WTC11 (cell line): ENCODE measurements at regions of chr4 and their contacts with region 1.

Region 1: DNA sequence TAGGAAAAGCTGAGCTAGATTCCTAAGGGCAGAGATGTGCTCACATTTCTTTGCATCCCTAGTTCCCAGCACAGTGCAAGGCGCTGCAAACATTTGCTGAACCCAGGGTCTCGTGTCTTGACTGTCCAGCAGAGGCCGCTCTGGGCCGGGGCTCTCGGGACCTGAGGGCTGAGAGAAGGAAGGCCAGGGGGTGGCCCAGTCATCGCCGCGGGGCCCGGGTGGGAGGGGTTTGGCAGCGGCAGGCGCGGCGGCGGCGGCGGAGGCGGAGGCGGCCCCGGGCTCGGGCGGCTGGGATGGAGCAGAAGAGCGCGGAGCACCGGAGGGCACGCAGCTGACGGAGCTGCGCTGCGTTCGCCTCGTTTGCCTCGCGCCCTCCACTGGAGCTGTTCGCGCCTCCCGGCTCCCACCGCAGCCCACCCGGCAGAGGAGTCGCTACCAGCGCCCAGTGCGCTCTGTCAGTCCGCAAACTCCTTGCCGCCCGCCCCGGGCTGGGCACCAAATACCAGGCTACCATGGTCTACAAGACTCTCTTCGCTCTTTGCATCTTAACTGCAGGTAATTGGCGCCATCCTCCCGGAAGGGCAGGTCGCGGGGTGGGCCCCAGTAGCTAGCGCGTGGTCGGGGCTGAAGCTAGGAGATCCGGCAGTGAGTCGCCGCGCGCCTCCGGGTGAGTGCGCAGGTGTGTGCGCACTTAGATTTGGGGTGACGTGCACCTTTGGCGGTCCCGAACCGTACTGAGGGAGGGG is at the start of gene PARM1:
- DNase-seq: peak; percentile 97
- ATAC-seq: peak; percentile 85
- H3K4me3 Mint-ChIP-seq: peak within 1 kb of the TSS; percentile 89
- H3K27ac Mint-ChIP-seq: no peak within 1 kb of the TSS
- H3K4me1 Mint-ChIP-seq: peaks cover 34% of the 10 kb centered on the region
- H3K27me3 Mint-ChIP-seq: peaks cover 43% of the 10 kb centered on the region
- CTCF ChIP-seq: peak; percentile 49; the same call in 1 of the 2 replicates
- total RNA-seq, gene PARM1: 3.5 to 6.3 TPM (median 4.1 TPM) in 3 replicates

Region 2: DNA sequence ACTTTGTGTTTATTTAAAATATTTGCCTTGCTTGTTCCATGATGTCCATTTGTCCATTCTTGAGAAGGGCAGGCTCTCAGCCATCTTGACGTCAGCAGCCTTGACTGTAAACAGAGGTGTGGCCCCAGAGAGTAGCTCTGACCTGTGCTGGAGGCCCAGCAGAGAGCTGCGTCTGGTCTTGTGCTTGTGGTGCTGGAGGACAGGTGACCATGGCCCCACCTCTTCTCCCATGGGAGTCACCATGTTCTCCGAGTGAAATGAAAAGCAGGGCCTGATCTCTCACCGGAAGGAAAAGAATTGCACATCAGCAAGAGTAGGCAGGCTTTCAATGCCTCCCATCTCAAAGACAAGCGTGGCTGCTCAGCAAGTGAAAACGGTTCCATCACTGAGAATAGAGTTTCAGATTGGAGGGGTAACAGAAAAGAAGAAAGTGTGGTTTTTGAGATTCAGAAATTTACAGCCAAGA is 11.4 kb after region 1 on chr4:
- CTCF ChIA-PET with region 1: interaction called, 18 read pairs
- POLR2A ChIA-PET with region 1: no interaction called
- DNase-seq: no peak
- ATAC-seq: no peak
- H3K4me3 Mint-ChIP-seq: no peak overlapping the region
- H3K27ac Mint-ChIP-seq: no peak overlapping the region
- H3K4me1 Mint-ChIP-seq: peaks cover 24% of the 10 kb centered on the region
- H3K27me3 Mint-ChIP-seq: no peaks in the 10 kb centered on the region; the same call in 1 of the 2 replicates
- CTCF ChIP-seq: no peak

Region 3: DNA sequence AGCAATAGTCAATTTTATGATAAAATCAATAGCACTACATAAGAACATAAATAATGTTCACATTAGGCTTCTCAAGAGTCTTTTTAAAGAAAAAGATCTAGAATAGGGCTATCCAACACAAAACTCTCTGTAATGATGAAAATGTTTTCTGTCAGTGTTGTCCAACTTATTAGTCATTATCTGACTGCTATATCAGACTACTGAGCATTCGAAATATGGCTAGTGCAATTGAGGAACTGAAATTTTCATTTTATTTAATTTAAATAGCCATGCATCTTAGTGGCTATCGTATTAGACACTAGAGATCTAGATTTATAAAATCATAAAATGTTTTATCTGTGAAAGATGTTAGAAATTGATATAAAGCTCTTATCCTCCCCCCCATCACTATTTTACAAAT is 25.9 kb after region 1 on chr4:
- CTCF ChIA-PET with region 1: no interaction called
- POLR2A ChIA-PET with region 1: no interaction called
- DNase-seq: no peak
- ATAC-seq: no peak
- H3K4me3 Mint-ChIP-seq: no peak overlapping the region
- H3K27ac Mint-ChIP-seq: no peak overlapping the region
- H3K4me1 Mint-ChIP-seq: peaks cover 13% of the 10 kb centered on the region
- H3K27me3 Mint-ChIP-seq: no peaks in the 10 kb centered on the region; the same call in 1 of the 2 replicates
- CTCF ChIP-seq: no peak

Region 4: GRCh38 chr4:75118739-75119138 is 185.8 kb after region 1 on chr4:
- CTCF ChIA-PET with region 1: interaction called, 12 read pairs
- POLR2A ChIA-PET with region 1: no interaction called
- DNase-seq: no peak
- ATAC-seq: no peak
- H3K4me3 Mint-ChIP-seq: no peak overlapping the region
- H3K27ac Mint-ChIP-seq: 0 out of 2 replicates have a peak overlapping the region, but pooled peaks have one; percentile 18
- H3K4me1 Mint-ChIP-seq: peaks cover 6% of the 10 kb centered on the region
- H3K27me3 Mint-ChIP-seq: no peaks in the 10 kb centered on the region; the same call in 1 of the 2 replicates
- CTCF ChIP-seq: no peak

Region 5: DNA sequence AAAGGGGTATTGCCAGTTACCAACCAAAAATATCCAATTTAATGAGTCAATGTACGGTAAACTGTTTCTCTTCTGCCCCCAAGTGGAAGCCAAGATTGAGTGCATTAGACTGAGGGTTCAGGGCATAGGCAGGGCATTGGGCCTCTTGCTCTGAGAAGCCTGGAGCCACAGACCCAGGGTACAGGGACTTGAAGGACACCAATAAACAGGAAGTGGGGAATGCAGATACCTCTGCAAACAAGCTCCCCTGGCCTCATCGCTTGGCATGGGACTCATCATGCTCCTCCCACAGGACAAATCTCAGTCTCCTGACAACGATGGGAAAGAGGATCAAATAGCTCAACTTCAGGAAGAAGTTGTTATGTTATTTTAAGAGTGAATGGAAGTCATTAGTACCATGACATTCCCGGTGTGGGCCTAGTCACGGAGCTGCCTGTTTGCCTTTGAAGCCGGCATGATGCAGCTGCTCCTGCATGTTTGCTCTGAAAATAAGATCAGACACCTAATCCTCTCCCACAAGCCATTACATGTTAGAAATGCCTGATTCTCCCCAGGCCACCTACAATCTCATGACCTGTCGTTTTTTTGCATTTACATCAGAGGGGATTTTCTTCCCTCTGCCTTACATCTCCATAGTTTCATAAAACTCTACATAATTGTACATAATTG is 357.1 kb after region 1 on chr4:
- CTCF ChIA-PET with region 1: interaction called, 12 read pairs
- POLR2A ChIA-PET with region 1: no interaction called
- DNase-seq: peak; percentile 53
- ATAC-seq: peak; percentile 100
- H3K4me3 Mint-ChIP-seq: no peak overlapping the region
- H3K27ac Mint-ChIP-seq: no peak overlapping the region
- H3K4me1 Mint-ChIP-seq: peaks cover 10% of the 10 kb centered on the region
- H3K27me3 Mint-ChIP-seq: no peaks in the 10 kb centered on the region
- CTCF ChIP-seq: no peak